IMR-90 (cell line): ENCODE measurements at regions of chr4 and their contacts with region 1.

Region 1: GRCh38 chr4:6606465-6607235 is 31.7 kb downstream of the MAN2B2 start:
- DNase-seq: no peak
- ATAC-seq: no peak
- H3K4me3 ChIP-seq: no peak overlapping the region
- H3K27ac ChIP-seq: no peak overlapping the region
- H3K4me1 ChIP-seq: no peaks in the 10 kb centered on the region
- H3K27me3 ChIP-seq: no peaks in the 10 kb centered on the region
- CTCF ChIP-seq: no peak
- POLR2A ChIP-seq: no peak
- RAD21 ChIP-seq: no peak

Region 2: DNA sequence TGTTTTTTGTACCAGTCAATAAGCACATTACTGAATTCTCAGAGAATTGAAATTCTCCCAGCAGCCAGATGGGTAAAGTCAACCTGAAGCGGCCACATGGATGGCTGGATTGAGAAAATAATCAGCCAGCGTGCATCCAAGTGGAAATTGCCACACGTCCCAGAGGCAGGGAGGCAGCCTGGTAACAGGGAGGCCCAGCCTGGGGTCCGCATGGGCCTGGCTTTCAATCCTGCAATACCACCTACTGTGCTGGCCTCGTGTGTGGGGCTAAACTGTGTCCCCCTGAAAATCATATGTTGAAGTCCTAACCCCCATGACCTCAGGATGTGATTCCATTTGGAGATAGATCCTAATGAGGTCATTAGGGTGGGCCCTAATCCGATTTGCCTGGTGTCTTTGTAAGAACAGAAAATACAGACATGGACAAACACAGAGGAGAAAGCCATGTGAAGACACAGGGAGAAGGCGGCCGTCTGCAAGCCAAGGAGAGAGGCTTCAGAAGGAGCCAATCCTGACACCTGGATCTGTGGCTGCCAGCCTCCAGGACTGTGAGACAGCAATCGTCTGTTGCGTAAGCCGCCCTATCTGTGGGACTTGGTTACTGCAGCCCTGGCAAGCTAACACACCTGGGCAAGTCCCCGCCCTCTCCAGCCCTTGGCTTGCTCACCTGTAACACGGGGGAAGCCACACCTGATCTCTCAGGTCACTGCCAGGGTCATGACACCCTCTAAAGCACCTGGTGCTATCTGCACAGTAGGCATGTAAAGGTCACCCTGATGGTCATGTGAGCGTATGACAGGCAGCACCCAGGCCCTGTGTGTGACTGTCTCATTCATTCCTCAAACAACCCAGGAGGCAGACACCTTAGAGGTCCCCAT is 496.6 kb before region 1 on chr4:
- CTCF ChIA-PET with region 1: no interaction called
- POLR2A ChIA-PET with region 1: no interaction called
- dilution Hi-C with region 1: no loop called
- in situ Hi-C with region 1: no loop called
- intact Hi-C with region 1: no loop called
- DNase-seq: no peak
- ATAC-seq: no peak
- H3K4me3 ChIP-seq: no peak overlapping the region
- H3K27ac ChIP-seq: no peak overlapping the region
- H3K4me1 ChIP-seq: no peaks in the 10 kb centered on the region
- H3K27me3 ChIP-seq: no peaks in the 10 kb centered on the region
- CTCF ChIP-seq: no peak
- POLR2A ChIP-seq: no peak
- RAD21 ChIP-seq: no peak

Region 3: DNA sequence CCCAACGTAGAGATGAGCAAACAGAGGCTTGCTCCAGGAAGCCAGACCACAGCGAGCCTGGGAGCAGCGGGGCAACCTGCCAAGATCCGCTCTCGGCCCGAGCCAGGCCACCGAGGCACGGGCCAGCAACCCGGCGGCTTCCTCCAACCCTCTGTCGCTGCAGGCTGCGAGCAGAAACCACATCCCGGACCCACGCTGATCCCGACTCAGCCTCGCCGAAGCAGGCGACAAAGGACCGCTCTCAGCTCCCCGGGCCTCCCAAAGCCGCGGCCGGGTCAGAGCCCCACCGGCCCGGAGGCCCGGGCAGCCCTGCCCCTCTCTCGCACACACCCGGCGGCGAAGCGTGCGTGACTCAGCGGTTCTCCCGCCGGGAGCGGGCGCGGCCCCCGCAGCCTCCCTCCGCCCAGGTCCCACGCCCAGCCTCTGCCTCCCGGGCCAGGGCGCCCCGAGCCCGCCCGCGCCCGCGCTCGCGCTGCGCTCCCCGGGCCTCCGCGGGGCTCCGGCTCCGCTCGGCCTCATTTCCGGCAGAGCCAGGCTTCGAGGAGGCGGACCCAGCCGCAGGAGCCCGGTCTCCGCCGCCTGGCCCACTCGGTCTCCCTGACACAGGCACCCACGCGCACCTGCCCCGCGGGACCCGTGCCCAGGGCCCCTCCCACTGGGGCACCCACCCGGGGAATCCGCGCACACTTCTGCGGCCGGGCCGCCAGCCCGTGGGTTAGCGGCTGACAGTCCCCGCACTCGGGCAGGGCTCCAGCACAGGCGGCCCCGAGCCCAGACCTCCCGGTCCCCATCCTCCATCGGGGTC is 135.9 kb before region 1 on chr4:
- CTCF ChIA-PET with region 1: no interaction called
- POLR2A ChIA-PET with region 1: no interaction called
- dilution Hi-C with region 1: no loop called
- in situ Hi-C with region 1: no loop called
- intact Hi-C with region 1: no loop called
- DNase-seq: peak; percentile 7
- ATAC-seq: peak; percentile 75
- H3K4me3 ChIP-seq: no peak overlapping the region
- H3K27ac ChIP-seq: no peak overlapping the region
- H3K4me1 ChIP-seq: no peaks in the 10 kb centered on the region
- H3K27me3 ChIP-seq: peaks cover 45% of the 10 kb centered on the region
- CTCF ChIP-seq: no peak
- POLR2A ChIP-seq: no peak
- RAD21 ChIP-seq: no peak

Region 4: DNA sequence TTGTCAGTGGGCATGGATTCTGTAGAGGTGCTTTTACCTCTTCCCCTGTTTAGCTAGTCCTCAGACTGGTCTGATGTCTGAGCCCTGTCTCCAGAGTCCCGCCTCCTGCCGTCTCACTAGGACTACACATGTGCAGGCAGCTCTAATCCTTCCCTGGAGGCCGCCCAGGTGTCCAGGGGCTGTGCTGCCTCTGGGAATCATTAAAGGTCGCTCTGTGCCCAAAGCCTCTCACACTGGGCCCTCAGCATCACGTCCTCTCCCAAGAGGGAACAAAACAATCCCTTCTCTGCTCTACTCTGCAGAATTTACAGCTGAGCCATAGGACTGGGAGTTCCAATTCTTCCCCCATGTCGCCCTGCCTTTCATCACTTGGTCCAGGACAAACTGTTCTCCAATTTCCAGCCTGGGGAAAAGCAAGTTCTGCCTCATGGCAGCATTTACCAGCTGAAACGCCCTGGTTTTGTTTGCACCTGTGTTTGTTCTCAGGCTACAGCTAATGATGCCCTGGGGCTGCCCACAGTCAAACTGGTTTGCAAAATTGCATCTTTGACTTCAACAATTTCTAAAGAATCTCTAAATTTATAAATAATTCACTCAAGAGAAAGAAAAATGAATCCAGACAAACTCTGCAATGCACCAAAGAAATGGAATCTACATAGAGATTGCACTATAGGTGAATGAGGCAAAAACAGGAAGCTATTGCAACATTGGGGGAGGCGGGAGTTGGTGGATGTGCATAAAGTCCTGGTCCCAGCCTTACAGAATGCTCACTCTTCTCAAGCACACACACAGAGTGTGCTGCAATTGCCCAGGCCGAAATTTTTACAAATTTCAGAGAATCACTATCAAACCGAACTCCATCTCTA is 26.6 kb after region 1 on chr4:
- CTCF ChIA-PET with region 1: no interaction called
- POLR2A ChIA-PET with region 1: interaction called, 10 read pairs
- dilution Hi-C with region 1: no loop called
- in situ Hi-C with region 1: no loop called
- intact Hi-C with region 1: no loop called
- DNase-seq: peak; percentile 49
- ATAC-seq: peak; percentile 60
- H3K4me3 ChIP-seq: no peak overlapping the region
- H3K27ac ChIP-seq: peak overlapping the region; percentile 29; the same call in 1 of the 2 replicates
- H3K4me1 ChIP-seq: peaks cover 4% of the 10 kb centered on the region; the same call in 1 of the 2 replicates
- H3K27me3 ChIP-seq: no peaks in the 10 kb centered on the region
- CTCF ChIP-seq: no peak
- POLR2A ChIP-seq: no peak
- RAD21 ChIP-seq: no peak